Right cardiac atrium (tissue), 5 donors: ENCODE measurements at regions of chr3 and their contacts with region 1.

Region 1: GRCh38 chr3:167406875-167407492 is 26.9 kb upstream of the ZBBX start:
- DNase-seq: peak; percentile 14 to 39 (median 30)
- ATAC-seq: peak; percentile 83 to 88
- H3K4me3 ChIP-seq: no peak overlapping the region
- H3K27ac ChIP-seq: no peak overlapping the region
- H3K4me1 ChIP-seq: no peaks in the 10 kb centered on the region
- H3K27me3 ChIP-seq: no peaks in the 10 kb centered on the region

Region 2: GRCh38 chr3:167304077-167304476 is 102.9 kb before region 1 on chr3:
- intact Hi-C with region 1: no loop called
- DNase-seq: no peak
- ATAC-seq: peak; percentile 82 to 90
- H3K4me3 ChIP-seq: no peak overlapping the region
- H3K27ac ChIP-seq: no peak overlapping the region
- H3K4me1 ChIP-seq: no peaks in the 10 kb centered on the region
- H3K27me3 ChIP-seq: no peaks in the 10 kb centered on the region

Region 3: DNA sequence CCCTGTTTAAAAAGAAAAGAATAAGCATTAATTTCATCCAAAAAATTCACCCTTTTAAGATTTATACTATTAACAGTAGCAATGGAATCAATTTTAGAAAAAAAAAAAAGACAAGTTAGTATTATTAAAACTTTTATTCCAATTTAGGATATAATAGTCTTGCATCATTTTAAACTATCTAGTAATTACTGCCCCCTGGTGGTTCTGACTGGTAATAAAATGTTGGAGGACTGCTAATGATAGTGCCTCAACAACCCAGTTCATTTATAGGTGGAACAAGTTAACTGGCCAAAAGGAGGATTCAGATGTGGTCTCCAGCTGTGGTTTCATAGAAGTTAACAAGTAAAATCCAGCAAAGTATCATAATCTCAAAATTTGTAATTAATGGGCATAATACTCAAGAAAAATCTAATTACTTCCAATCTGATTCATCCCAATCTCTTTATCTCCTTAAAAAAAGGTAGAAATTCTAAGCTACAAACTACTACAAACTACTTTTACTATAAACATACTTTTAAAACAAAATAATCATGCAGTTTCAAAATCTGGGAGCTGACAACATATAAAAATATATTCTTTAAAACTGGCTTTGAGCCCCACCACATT is 277.5 kb after region 1 on chr3:
- intact Hi-C with region 1: loop called (anchors 5 to 10 kb)
- DNase-seq: no peak
- ATAC-seq: peak in 1 of 2 donors; percentile 57
- H3K4me3 ChIP-seq: no peak overlapping the region
- H3K27ac ChIP-seq: no peak overlapping the region
- H3K4me1 ChIP-seq: no peaks in the 10 kb centered on the region
- H3K27me3 ChIP-seq: no peaks in the 10 kb centered on the region

Region 4: GRCh38 chr3:167882067-167882667 is 475.2 kb after region 1 on chr3:
- intact Hi-C with region 1: loop called in 1 of 4 experiments (anchors 10 kb)
- DNase-seq: no peak
- ATAC-seq: peak in 1 of 2 donors; percentile 31
- H3K4me3 ChIP-seq: peak overlapping the region; percentile 29
- H3K27ac ChIP-seq: no peak overlapping the region
- H3K4me1 ChIP-seq: no peaks in the 10 kb centered on the region
- H3K27me3 ChIP-seq: no peaks in the 10 kb centered on the region